ENCODE measurements at regions of chr11 and their contacts with region 1.

Region 1: DNA sequence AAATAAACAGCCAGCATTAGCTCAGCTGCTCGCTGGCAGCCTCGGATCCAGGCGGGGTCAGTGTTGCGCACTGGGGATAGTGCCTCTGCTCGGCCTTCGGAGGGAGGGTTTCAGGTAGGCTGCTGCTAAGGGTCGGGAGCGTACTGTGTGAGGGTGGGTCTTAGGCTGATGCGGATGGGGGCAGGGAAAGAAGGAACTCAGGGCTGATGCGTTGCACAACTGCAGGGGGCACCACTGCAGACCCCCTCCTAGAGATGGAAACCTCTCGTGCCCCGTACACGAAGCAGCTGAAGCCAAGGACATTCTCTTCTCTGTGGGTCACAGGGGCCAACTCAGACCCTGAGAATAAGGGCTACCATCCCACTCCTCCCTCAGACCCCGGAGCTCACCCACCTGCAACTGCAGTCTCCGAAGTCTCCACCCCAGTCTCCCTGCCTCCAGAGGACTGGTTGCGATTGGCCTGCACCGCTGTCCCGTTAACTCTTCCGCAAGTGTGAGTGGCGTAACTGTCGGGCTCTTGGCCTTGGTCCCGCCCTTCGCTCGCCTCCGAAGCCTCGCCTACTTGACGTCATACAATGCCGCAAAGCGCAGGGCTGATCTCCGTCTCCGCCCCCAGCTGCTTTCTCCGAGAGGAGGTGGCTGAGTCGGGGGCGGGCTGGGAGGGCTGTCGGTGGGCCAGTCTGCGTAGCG is at the start of gene KBTBD3:
- DNase-seq: peak; percentile 71 to 98
- ATAC-seq: peak; percentile 96 to 98
- H3K4me3 ChIP-seq: peak within 1 kb of the TSS; percentile 76
- H3K27ac ChIP-seq: peak within 1 kb of the TSS; percentile 92 to 95
- H3K4me1 ChIP-seq: peaks cover 23% of the 10 kb centered on the region; the same call in 2 of the 3 replicates
- CTCF ChIP-seq: peak; percentile 32; the same call in 2 of the 3 replicates
- EP300 ChIP-seq: no peak
- POLR2A ChIP-seq: peak; percentile 38
- RAD21 ChIP-seq: no peak
- polyA plus RNA-seq, gene KBTBD3: 6.9 and 9.4 TPM in 2 replicates

Region 2: GRCh38 chr11:106021967-106022794 is 54.9 kb before region 1 on chr11 and contains the start of gene MSANTD4:
- CTCF ChIA-PET with region 1: no interaction called
- POLR2A ChIA-PET with region 1: interaction called, 10 read pairs
- DNase-seq: peak; percentile 94 to 98
- ATAC-seq: peak; percentile 99 to 100
- H3K4me3 ChIP-seq: peak within 1 kb of the TSS; percentile 72
- H3K27ac ChIP-seq: peak within 1 kb of the TSS; percentile 74 to 96
- H3K4me1 ChIP-seq: peaks cover 21% of the 10 kb centered on the region
- CTCF ChIP-seq: no peak
- EP300 ChIP-seq: no peak
- POLR2A ChIP-seq: peak; percentile 43
- RAD21 ChIP-seq: no peak
- polyA plus RNA-seq, gene MSANTD4: 10.7 and 14.2 TPM in 2 replicates

Region 3: GRCh38 chr11:106101819-106102218 is 24.8 kb after region 1 on chr11:
- CTCF ChIA-PET with region 1: no interaction called
- POLR2A ChIA-PET with region 1: no interaction called
- DNase-seq: peak in 1 of 2 experiments; percentile 4
- ATAC-seq: no peak
- H3K4me3 ChIP-seq: no peak overlapping the region
- H3K27ac ChIP-seq: no peak overlapping the region
- H3K4me1 ChIP-seq: no peaks in the 10 kb centered on the region
- CTCF ChIP-seq: no peak
- EP300 ChIP-seq: no peak
- POLR2A ChIP-seq: no peak
- RAD21 ChIP-seq: no peak